ENCODE measurements at regions of chr22 and their contacts with region 1.

Region 1: GRCh38 chr22:18070556-18071306 is 7.1 kb upstream of the PEX26 start:
- DNase-seq: peak in 1 of 2 experiments; percentile 37
- H3K4me3 ChIP-seq: no peak overlapping the region
- H3K4me1 ChIP-seq: no peaks in the 10 kb centered on the region
- H3K27me3 ChIP-seq: peaks cover 35% of the 10 kb centered on the region

Region 2: DNA sequence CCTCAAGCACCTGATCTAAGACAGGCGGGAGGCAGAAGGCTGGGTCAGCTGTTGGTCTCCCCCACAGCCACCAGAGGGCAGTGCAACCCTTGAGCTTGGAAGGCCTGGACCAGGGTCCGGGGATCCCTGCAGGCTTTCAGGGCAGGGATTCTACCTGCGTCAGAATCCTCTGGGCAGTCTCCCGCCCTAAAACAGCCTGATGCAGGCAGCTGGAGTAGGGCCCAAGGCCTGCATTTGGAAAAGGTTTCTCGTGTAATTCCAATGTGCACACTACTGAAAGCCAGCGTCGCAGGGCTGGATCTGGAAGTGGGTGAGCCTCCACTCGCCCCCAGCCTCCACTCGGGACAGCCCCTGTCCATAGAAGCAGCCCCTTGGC is 328.2 kb before region 1 on chr22:
- in situ Hi-C with region 1: loop called (anchors 5 kb)
- DNase-seq: peak; percentile 69 to 87
- H3K4me3 ChIP-seq: no peak overlapping the region
- H3K4me1 ChIP-seq: no peaks in the 10 kb centered on the region
- H3K27me3 ChIP-seq: no peaks in the 10 kb centered on the region

Region 3: DNA sequence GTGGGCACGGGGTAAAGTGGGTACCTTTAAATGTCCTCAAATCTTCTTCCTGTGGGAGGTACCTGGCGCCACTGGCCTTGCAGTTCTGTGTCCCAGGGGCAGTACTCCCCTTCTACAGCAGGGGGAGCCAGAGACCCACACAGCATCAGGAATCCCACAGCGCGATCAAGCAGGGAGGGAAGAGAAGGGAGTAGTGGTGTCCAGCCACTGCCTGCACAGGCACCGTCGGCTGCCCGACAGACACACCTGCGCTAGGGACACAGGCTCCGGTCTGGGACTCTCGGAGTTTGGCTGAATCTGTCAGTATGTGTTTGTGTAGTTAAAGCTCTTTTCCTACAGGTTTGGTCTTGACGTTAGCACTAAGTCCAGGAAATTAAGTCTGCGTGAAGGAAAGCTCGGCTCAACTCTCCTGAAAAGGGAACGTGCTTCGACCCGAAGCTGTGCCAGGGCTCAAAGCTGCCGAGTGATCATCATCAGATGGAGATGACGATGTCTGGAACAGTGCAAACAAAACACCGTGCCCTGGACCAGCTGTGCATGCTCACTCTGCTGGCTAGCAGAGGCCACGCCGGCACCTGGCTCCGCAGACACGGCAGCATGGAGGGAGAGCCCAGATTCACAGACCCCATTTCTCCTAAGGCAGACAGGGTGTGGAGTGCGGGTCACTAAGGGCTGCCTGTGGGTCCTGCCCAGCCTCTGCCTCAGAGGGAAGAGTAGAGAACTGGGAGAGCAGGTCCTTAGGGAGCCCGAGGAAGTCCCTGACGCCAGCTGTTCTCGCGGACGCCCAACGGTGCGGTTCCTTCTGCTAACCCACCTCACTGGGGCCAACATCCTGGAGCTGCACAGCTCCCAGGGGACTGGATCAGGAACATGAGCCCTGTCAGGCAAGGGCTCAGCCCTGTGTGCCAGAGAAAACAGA is 240.4 kb before region 1 on chr22:
- in situ Hi-C with region 1: loop called (anchors 5 kb)
- DNase-seq: peak; percentile 38 to 88
- H3K4me3 ChIP-seq: no peak overlapping the region
- H3K4me1 ChIP-seq: no peaks in the 10 kb centered on the region
- H3K27me3 ChIP-seq: no peaks in the 10 kb centered on the region

Measured in HAP-1 (cell line).